ENCODE measurements at regions of chr6 and their contacts with region 1.

Region 1: DNA sequence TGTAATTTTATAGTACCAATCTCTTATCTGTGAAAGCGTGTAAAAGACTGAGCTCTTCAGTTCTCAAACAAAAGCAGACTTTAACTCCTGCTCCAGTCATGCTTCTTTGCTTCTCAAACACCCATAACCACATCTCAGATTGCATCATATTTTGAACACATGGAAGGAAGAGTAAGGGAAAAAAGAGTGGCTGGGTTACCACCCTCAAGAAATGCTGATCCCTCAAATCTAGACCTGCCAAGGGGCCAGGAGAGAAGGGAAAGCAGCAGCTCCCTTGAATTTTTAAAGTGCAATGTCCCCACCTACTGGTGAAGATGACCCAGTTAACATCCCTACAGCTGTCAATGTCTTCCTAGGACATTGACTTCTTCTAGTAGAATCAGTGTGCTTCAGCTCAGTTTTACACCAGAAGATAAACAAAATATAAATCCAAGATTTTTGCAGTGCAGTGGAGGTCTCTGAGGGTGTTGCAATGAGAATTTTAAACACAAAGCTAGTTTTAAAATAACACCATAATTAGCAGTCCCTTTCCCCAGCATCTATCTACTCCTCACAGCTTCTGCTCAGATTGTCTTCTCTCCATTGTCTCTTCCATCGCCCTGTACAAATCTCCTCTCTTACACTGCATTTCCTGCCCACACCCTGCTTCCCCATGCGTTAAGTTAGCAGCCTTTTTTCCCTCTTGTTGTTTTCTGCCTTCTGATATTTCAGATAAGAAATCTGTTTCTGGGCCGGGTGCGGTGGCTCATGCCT is 22.6 kb upstream of the HLA-DQB2 start:
- DNase-seq: peak; percentile 73
- H3K4me3 ChIP-seq: no peak overlapping the region
- H3K27ac ChIP-seq: no peak overlapping the region
- H3K4me1 ChIP-seq: no peaks in the 10 kb centered on the region
- CTCF ChIP-seq: peak; percentile 85

Region 2: GRCh38 chr6:32700391-32701040 is 85.4 kb before region 1 on chr6:
- CTCF ChIA-PET with region 1: interaction called, 4 read pairs
- POLR2A ChIA-PET with region 1: interaction called, 4 read pairs
- intact Hi-C with region 1: loop called (anchors 1 kb)
- DNase-seq: peak; percentile 70
- H3K4me3 ChIP-seq: no peak overlapping the region
- H3K27ac ChIP-seq: no peak overlapping the region
- H3K4me1 ChIP-seq: peaks cover 6% of the 10 kb centered on the region
- CTCF ChIP-seq: peak; percentile 95

Region 3: GRCh38 chr6:32879691-32880090 is 93.7 kb after region 1 on chr6:
- CTCF ChIA-PET with region 1: no interaction called
- POLR2A ChIA-PET with region 1: no interaction called
- intact Hi-C with region 1: no loop called
- DNase-seq: no peak
- H3K4me3 ChIP-seq: no peak overlapping the region
- H3K27ac ChIP-seq: no peak overlapping the region
- H3K4me1 ChIP-seq: peaks cover 9% of the 10 kb centered on the region
- CTCF ChIP-seq: no peak

Measured in OCI-LY7 (cell line).